ENCODE measurements at regions of chr12 and their contacts with region 1.

Region 1: DNA sequence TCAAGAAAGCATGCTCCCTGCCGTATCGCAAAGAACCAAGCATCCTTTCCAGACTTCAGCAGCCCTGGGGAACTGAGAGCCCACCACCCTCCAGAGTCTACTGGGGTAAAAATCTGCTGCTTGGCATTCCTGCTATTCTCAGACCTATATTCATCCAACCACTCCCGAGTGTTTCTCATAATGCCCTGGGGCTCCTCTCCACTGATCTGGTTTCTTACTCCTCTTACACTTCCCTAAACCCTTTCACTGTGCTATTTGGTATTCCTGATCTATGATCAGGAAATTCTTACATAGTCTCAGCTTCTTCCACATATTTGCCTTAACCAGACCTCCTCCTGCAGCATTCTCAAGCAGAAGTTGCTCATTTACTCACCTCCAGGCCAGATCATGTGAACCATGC is 82.5 kb downstream of the SYT10 start:
- DNase-seq: no peak
- ATAC-seq: no peak
- H3K4me3 ChIP-seq: no peak overlapping the region
- H3K4me3 Mint-ChIP-seq: no peak overlapping the region
- H3K27ac ChIP-seq: no peak overlapping the region
- H3K27ac Mint-ChIP-seq: no peak overlapping the region
- H3K4me1 ChIP-seq: no peaks in the 10 kb centered on the region
- H3K4me1 Mint-ChIP-seq: no peaks in the 10 kb centered on the region
- H3K27me3 ChIP-seq: no peaks in the 10 kb centered on the region
- H3K27me3 Mint-ChIP-seq: no peaks in the 10 kb centered on the region

Region 2: DNA sequence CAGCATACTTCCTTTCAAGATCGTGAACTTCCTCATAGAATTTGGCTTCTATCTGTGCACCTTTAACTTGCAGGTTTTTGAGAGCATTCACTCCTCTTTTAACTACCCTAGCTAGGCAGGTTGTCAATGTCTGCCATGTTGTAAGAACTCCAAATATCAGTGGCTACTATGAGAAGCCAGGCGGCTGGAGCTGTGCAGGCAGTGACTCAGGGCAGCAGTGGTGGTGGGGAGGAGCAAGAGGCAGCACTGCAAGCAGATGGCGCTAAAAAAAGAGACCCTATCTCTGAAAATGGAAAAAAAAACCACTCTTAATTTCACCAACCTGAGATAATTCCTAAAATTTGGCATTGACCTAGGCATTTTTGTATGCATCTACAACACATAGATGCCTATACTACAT is 629.9 kb before region 1 on chr12:
- CTCF ChIA-PET with region 1: no interaction called
- POLR2A ChIA-PET with region 1: interaction called in 1 of 2 experiments, 10 read pairs
- DNase-seq: no peak
- ATAC-seq: no peak
- H3K4me3 ChIP-seq: no peak overlapping the region
- H3K4me3 Mint-ChIP-seq: no peak overlapping the region
- H3K27ac ChIP-seq: no peak overlapping the region
- H3K27ac Mint-ChIP-seq: peak overlapping the region in 1 of 2 donors; percentile 13
- H3K4me1 ChIP-seq: no peaks in the 10 kb centered on the region
- H3K4me1 Mint-ChIP-seq: peaks cover 0 to 2% (median 0%) of the 10 kb centered on the region in 3 donors
- H3K27me3 ChIP-seq: no peaks in the 10 kb centered on the region
- H3K27me3 Mint-ChIP-seq: no peaks in the 10 kb centered on the region

Region 3: DNA sequence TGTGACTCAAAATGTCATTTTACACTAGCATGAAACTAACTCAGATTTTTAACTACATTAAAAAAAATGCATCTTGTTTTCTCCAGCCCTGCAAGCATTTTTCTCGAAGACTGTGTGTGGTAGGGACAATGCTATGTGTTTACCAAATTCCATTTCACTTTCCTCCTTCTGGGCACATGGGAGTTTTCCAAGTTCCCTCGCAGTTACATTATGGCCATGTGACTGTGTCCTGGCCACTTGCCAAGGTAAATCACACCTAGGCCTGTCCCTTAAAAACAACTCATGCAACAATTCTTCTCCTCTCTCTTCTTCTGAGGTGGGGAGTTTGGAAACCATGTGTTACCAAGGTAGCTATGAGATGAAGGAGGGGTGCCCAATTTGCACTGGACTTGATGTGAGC is 26.2 kb before region 1 on chr12:
- CTCF ChIA-PET with region 1: no interaction called
- POLR2A ChIA-PET with region 1: no interaction called
- DNase-seq: no peak
- ATAC-seq: no peak
- H3K4me3 ChIP-seq: no peak overlapping the region
- H3K4me3 Mint-ChIP-seq: no peak overlapping the region
- H3K27ac ChIP-seq: no peak overlapping the region
- H3K27ac Mint-ChIP-seq: no peak overlapping the region
- H3K4me1 ChIP-seq: no peaks in the 10 kb centered on the region
- H3K4me1 Mint-ChIP-seq: no peaks in the 10 kb centered on the region
- H3K27me3 ChIP-seq: no peaks in the 10 kb centered on the region
- H3K27me3 Mint-ChIP-seq: no peaks in the 10 kb centered on the region

Region 4: GRCh38 chr12:33383503-33383902 is 26.3 kb after region 1 on chr12:
- CTCF ChIA-PET with region 1: no interaction called
- POLR2A ChIA-PET with region 1: no interaction called
- DNase-seq: no peak
- ATAC-seq: no peak
- H3K4me3 ChIP-seq: no peak overlapping the region
- H3K4me3 Mint-ChIP-seq: no peak overlapping the region
- H3K27ac ChIP-seq: no peak overlapping the region
- H3K27ac Mint-ChIP-seq: no peak overlapping the region
- H3K4me1 ChIP-seq: no peaks in the 10 kb centered on the region
- H3K4me1 Mint-ChIP-seq: no peaks in the 10 kb centered on the region
- H3K27me3 ChIP-seq: no peaks in the 10 kb centered on the region
- H3K27me3 Mint-ChIP-seq: no peaks in the 10 kb centered on the region